ENCODE measurements at regions of chr4 and their contacts with region 1.

Region 1: GRCh38 chr4:6986781-6987587 is 56.2 kb upstream of the TADA2B start:
- DNase-seq: peak; percentile 97
- ATAC-seq: peak; percentile 93
- H3K4me3 Mint-ChIP-seq: peak overlapping the region; percentile 96
- H3K27ac Mint-ChIP-seq: peak overlapping the region; percentile 93
- H3K4me1 Mint-ChIP-seq: peaks cover 66% of the 10 kb centered on the region
- H3K27me3 Mint-ChIP-seq: no peaks in the 10 kb centered on the region

Region 2: GRCh38 chr4:6574747-6575502 is 412.1 kb before region 1 on chr4 and contains the start of gene MAN2B2:
- CTCF ChIA-PET with region 1: no interaction called
- POLR2A ChIA-PET with region 1: no interaction called
- intact Hi-C with region 1: loop called in 1 of 2 experiments (anchors 1 kb)
- DNase-seq: peak; percentile 89
- ATAC-seq: peak; percentile 96
- H3K4me3 Mint-ChIP-seq: peak within 1 kb of the TSS; percentile 78
- H3K27ac Mint-ChIP-seq: peak within 1 kb of the TSS; percentile 74
- H3K4me1 Mint-ChIP-seq: peaks cover 6% of the 10 kb centered on the region
- H3K27me3 Mint-ChIP-seq: no peaks in the 10 kb centered on the region
- total RNA-seq, gene MAN2B2: 13.0 to 14.6 TPM

Region 3: GRCh38 chr4:6709230-6710114 is 277.5 kb before region 1 on chr4 and contains the start of gene MRFAP1L1:
- CTCF ChIA-PET with region 1: no interaction called
- POLR2A ChIA-PET with region 1: interaction called, 3 read pairs
- intact Hi-C with region 1: loop called (anchors 2 to 10 kb)
- DNase-seq: peak; percentile 98
- ATAC-seq: peak; percentile 73
- H3K4me3 Mint-ChIP-seq: peak within 1 kb of the TSS; percentile 98
- H3K27ac Mint-ChIP-seq: peak within 1 kb of the TSS; percentile 98
- H3K4me1 Mint-ChIP-seq: peaks cover 46% of the 10 kb centered on the region
- H3K27me3 Mint-ChIP-seq: no peaks in the 10 kb centered on the region
- total RNA-seq, gene MRFAP1L1: 36.4 to 45.0 TPM

Region 4: GRCh38 chr4:6974138-6974848 is 12.7 kb before region 1 on chr4:
- CTCF ChIA-PET with region 1: interaction called, 9 read pairs
- POLR2A ChIA-PET with region 1: interaction called, 3 read pairs
- intact Hi-C with region 1: loop called in 1 of 2 experiments (anchors 1 kb)
- DNase-seq: peak; percentile 90
- ATAC-seq: peak; percentile 96
- H3K4me3 Mint-ChIP-seq: no peak overlapping the region
- H3K27ac Mint-ChIP-seq: no peak overlapping the region
- H3K4me1 Mint-ChIP-seq: peaks cover 10% of the 10 kb centered on the region
- H3K27me3 Mint-ChIP-seq: no peaks in the 10 kb centered on the region

Region 5: DNA sequence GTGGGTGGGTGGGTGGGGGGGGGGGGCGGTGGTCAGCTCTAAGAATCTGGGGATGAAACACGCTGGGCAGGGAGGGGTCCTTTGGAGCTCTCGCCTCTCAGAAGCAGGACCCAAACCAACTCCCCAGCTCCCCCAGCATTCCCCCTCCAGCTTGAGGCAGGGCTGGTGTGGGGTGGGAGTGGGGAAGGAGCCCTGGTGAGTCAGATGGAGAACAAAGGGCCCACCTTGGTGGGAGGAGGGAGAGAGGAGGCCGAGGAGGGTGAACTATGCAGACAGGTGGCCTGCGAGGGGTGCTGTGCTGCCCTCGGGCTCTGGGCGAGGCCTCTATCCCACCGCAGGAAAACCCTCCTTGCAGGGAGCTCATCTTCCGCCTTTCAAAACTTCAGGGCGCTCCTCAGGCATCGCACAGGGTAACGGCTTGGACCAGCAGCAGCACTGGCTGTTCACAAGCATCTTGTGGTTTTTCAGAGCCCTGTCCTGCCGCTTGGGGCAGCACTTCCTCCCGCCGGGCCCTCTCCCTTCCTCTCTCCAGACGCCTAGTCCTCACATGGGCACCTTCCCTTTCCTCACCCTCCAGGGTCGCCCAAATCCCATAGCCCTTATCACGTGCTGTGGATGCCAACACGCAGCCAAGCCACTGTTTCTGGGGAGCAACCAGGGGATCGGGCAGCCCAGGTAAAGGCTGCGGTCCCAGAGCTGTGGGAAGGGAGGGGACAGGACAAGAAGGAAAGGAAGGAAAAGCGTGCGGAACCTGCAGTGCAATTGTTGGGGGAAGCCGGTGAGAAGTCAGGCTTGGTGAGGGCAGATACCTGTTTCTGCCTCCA is 114.9 kb after region 1 on chr4:
- CTCF ChIA-PET with region 1: no interaction called
- POLR2A ChIA-PET with region 1: no interaction called
- intact Hi-C with region 1: loop called in 1 of 2 experiments (anchors 1 kb)
- DNase-seq: peak; percentile 78
- ATAC-seq: peak; percentile 74
- H3K4me3 Mint-ChIP-seq: peak overlapping the region; percentile 84
- H3K27ac Mint-ChIP-seq: no peak overlapping the region
- H3K4me1 Mint-ChIP-seq: peaks cover 8% of the 10 kb centered on the region
- H3K27me3 Mint-ChIP-seq: no peaks in the 10 kb centered on the region

Region 6: DNA sequence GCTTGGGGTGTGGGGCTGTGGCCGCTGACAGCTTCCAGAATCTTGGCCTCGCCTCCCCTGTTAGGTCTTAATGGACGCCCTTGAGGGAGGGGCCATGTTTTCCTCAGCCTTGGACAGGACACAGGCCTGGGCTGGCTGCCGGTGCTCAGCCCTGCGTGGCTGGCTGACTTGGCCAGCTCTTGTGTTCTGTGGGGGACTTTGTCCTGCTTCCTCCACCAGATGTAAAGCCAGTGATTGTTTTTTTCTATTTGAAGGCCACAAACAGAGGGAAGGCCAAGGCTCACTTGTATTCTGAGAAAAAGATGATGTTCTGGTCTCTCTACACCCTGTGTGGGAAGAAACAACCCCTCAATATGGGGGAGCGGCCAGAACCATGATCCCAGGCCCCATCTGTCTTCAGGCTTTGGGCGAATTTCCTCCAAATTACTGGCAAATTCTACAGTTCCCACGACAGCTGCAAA is 1353.8 kb after region 1 on chr4:
- CTCF ChIA-PET with region 1: no interaction called
- POLR2A ChIA-PET with region 1: no interaction called
- intact Hi-C with region 1: no loop called
- DNase-seq: no peak
- ATAC-seq: no peak
- H3K4me3 Mint-ChIP-seq: no peak overlapping the region
- H3K27ac Mint-ChIP-seq: no peak overlapping the region
- H3K4me1 Mint-ChIP-seq: no peaks in the 10 kb centered on the region
- H3K27me3 Mint-ChIP-seq: peaks cover 3% of the 10 kb centered on the region